ENCODE measurements at regions of chr20 and their contacts with region 1.

Region 1: DNA sequence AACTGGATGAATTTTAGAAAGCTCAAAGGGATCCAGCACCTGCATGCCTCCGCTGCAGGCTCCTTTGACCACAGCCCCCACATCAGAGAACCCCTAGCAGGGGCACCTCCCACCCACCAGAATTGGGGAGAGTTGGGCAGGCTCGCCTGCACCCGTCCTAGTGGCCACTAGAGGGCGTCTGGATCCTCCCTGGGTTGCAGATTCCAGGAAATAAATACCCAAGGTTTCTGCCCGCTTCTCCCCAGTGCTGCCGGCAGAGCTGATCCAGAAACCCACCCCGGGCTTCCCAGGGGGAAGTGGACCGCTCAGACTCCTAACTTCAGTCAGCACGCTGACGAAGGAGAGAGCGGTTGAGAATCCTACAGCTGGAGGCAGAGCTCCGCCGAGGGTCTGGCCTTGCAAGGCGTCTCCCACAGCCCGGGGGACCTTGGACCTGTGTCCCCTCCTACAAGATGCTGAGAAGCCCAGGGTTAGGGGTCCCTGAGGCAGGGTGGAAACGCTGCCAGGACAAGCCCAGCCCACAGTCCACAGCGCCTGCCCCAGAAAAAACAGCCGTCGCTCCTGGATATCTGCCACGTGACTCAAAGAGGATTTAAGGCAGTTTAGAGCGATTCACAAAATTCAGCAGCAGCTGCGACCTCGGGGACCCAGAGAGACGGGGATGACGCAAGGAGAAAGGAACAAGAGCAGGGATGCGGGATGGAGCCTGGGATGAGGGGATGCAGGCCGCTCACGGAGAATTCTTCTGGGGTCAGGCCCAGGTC is 32.6 kb upstream of the PHACTR3 start:
- DNase-seq: peak in 4 of 5 donors; percentile 28 to 48 (median 38)
- H3K4me3 ChIP-seq: no peak overlapping the region
- H3K4me3 Mint-ChIP-seq: peak overlapping the region in 7 of 8 donors; percentile 49 to 72 (median 64)
- H3K27ac ChIP-seq: no peak overlapping the region
- H3K27ac Mint-ChIP-seq: peak overlapping the region in 1 of 7 donors; percentile 52
- H3K4me1 ChIP-seq: peaks cover 4% of the 10 kb centered on the region
- H3K4me1 Mint-ChIP-seq: peaks cover 1 to 9% (median 4%) of the 10 kb centered on the region in 4 donors
- H3K27me3 ChIP-seq: no peaks in the 10 kb centered on the region
- H3K27me3 Mint-ChIP-seq: peaks cover 26 to 43% of the 10 kb centered on the region in 2 donors

Region 2: GRCh38 chr20:59547596-59547995 is 24.1 kb before region 1 on chr20:
- CTCF ChIA-PET with region 1: interaction called, 11 read pairs
- POLR2A ChIA-PET with region 1: no interaction called
- intact Hi-C with region 1: no loop called
- DNase-seq: no peak
- H3K4me3 ChIP-seq: no peak overlapping the region
- H3K4me3 Mint-ChIP-seq: no peak overlapping the region
- H3K27ac ChIP-seq: no peak overlapping the region
- H3K27ac Mint-ChIP-seq: no peak overlapping the region
- H3K4me1 ChIP-seq: no peaks in the 10 kb centered on the region
- H3K4me1 Mint-ChIP-seq: no peaks in the 10 kb centered on the region
- H3K27me3 ChIP-seq: peaks cover 4% of the 10 kb centered on the region
- H3K27me3 Mint-ChIP-seq: peaks cover 11 to 18% of the 10 kb centered on the region in 2 donors

Region 3: DNA sequence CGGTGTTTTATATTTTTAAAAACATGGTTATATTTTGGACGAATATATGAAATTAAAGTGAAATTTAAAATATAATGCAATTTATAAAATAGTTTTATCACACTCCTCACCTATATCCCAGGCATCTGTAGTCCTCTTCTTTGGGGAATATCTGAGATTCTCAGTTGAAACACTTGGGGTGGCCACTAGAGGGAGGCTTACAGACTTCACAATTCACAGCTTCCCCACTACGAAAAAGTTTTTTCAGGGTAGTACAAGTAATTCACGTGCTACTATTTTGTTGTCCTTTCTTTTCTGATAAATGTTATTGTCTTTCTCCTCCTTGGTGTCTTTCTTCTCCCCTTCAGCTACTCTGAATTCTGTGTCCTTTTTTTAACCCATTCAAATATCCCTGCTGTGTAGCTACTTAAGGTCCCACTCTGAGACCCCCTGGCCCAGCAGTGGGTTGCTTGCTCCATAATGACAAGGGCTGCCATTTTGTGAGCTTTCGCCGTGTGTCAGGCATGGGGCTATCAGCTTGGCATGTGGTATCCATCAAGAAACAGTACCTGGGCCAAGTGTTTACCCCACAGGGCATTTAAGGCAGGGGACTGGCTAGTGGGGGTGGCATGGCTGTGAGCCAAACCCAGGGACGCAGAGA is 11.0 kb before region 1 on chr20:
- CTCF ChIA-PET with region 1: interaction called, 19 read pairs
- POLR2A ChIA-PET with region 1: no interaction called
- intact Hi-C with region 1: no loop called
- DNase-seq: no peak
- H3K4me3 ChIP-seq: no peak overlapping the region
- H3K4me3 Mint-ChIP-seq: no peak overlapping the region
- H3K27ac ChIP-seq: no peak overlapping the region
- H3K27ac Mint-ChIP-seq: no peak overlapping the region
- H3K4me1 ChIP-seq: no peaks in the 10 kb centered on the region
- H3K4me1 Mint-ChIP-seq: peaks cover 0 to 3% (median 2%) of the 10 kb centered on the region in 4 donors
- H3K27me3 ChIP-seq: no peaks in the 10 kb centered on the region
- H3K27me3 Mint-ChIP-seq: peaks cover 5 to 11% of the 10 kb centered on the region in 2 donors

Region 4: DNA sequence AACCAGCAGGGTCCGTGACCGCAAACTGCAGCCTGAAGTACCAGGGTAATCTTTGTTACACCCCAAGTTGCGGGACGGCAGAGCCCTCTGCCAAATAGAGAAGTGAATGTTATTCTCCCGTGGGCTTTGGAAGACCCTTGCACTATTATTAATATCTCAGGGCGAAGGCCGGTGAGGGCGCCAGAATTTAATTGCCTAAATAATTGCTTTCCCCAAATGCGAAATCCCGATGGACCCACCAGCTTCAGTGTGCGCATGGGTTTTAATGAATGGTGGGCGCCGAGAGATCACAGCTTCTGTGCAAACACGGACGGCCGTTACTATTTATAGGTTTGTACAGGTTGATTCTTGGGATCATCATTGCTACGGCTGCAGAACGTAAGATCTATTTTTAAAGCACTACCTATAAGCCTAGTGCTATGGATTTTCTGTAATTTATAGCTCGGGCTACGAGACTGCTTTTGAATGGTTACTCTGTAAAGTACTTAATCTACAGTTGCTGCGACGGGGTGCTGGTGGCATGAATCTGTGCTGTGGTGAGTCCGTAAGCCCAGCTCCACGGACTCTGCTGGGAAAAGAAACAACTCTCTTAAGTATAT is 17.5 kb after region 1 on chr20:
- CTCF ChIA-PET with region 1: interaction called, 10 read pairs
- POLR2A ChIA-PET with region 1: no interaction called
- intact Hi-C with region 1: no loop called
- DNase-seq: no peak
- H3K4me3 ChIP-seq: no peak overlapping the region
- H3K4me3 Mint-ChIP-seq: no peak overlapping the region
- H3K27ac ChIP-seq: no peak overlapping the region
- H3K27ac Mint-ChIP-seq: no peak overlapping the region
- H3K4me1 ChIP-seq: no peaks in the 10 kb centered on the region
- H3K4me1 Mint-ChIP-seq: no peaks in the 10 kb centered on the region
- H3K27me3 ChIP-seq: no peaks in the 10 kb centered on the region
- H3K27me3 Mint-ChIP-seq: peaks cover 3 to 8% of the 10 kb centered on the region in 2 donors

Measured in CD4-positive, alpha-beta memory T cell (primary cell).